Pancreas (tissue), 10 donors: ENCODE measurements at regions of chr1 and their contacts with region 1.

Region 1: DNA sequence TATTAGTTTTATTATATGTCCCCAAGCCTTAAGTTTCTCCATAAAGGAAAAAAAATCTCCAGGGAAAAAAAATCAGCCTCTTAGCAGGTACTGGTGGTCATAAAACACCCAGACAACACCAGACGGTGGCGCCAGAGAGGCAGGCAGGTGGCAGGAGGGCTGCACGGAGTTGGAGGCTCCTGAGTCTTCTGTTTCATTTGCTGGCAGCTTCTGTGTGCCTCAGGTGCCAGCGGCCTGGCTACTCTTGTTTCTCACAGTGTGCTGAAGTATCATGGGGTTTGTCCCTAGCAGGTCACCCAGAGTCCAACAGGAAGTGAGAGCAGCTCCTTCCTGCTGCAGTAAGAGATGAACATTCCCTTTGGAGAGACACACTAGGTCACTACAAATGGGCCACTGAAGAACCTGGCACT is 123.3 kb upstream of the GADD45A start:
- DNase-seq: peak; percentile 94 to 100 (median 96)
- ATAC-seq: peak; percentile 94 to 98 (median 96)
- H3K4me3 ChIP-seq: no peak overlapping the region
- H3K27ac ChIP-seq: peak overlapping the region in 3 of 4 donors; percentile 52 to 56 (median 55)
- H3K4me1 ChIP-seq: peaks cover 0 to 12% (median 8%) of the 10 kb centered on the region in 3 donors
- H3K27me3 ChIP-seq: no peaks in the 10 kb centered on the region
- CTCF ChIP-seq: peak; percentile 77 to 87 (median 83)

Region 2: GRCh38 chr1:67664048-67664447 is 102.3 kb after region 1 on chr1:
- intact Hi-C with region 1: loop called in 1 of 3 experiments (anchors 10 kb)
- DNase-seq: no peak
- ATAC-seq: no peak
- H3K4me3 ChIP-seq: no peak overlapping the region
- H3K27ac ChIP-seq: no peak overlapping the region
- H3K4me1 ChIP-seq: no peaks in the 10 kb centered on the region
- H3K27me3 ChIP-seq: no peaks in the 10 kb centered on the region
- CTCF ChIP-seq: no peak

Region 3: DNA sequence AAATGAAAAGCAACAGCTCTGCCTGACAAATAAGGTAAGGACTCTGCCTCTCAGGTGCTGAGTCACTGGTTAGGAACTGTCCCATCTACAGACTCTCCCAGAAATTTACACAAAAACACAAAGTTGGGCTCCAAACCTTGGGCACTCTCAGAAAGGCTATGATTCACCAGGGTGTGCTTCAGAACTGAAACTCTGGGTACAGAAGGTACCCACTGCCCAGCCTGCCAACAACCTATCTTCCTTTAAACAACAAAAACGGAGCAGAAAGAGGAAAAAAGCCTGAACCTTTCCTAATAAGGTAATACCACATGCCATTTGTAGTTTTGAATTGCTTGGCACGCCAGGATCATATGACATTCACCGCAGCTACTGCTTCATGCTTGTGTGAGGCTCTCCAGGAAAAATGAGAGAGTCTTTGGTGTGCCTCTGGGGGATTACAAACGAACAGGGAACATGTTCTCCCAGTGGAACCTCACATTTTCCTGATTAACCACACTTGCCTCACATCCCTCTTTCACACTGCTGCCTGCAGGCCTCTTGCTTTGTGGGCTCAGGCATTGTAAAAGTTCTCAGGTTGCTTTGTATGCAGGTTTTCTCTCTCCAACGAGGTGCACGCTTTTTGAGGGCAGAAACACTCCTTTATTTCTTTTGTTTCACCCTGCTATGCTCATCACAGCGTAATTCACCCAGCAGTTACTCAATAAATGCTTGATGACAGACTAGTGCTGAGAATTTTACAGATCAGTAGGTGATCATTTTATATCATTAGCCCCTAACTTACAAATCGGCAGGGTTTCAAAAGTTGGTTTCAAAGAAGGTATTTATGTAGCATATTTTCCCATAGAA is 188.4 kb after region 1 on chr1:
- intact Hi-C with region 1: loop called in 2 of 3 experiments (anchors 5 to 10 kb)
- DNase-seq: no peak
- ATAC-seq: peak; percentile 63 to 74 (median 68)
- H3K4me3 ChIP-seq: no peak overlapping the region
- H3K27ac ChIP-seq: peak overlapping the region; percentile 9 to 81 (median 50)
- H3K4me1 ChIP-seq: peaks cover 20 to 28% (median 27%) of the 10 kb centered on the region in 3 donors
- H3K27me3 ChIP-seq: no peaks in the 10 kb centered on the region
- CTCF ChIP-seq: no peak

Region 4: DNA sequence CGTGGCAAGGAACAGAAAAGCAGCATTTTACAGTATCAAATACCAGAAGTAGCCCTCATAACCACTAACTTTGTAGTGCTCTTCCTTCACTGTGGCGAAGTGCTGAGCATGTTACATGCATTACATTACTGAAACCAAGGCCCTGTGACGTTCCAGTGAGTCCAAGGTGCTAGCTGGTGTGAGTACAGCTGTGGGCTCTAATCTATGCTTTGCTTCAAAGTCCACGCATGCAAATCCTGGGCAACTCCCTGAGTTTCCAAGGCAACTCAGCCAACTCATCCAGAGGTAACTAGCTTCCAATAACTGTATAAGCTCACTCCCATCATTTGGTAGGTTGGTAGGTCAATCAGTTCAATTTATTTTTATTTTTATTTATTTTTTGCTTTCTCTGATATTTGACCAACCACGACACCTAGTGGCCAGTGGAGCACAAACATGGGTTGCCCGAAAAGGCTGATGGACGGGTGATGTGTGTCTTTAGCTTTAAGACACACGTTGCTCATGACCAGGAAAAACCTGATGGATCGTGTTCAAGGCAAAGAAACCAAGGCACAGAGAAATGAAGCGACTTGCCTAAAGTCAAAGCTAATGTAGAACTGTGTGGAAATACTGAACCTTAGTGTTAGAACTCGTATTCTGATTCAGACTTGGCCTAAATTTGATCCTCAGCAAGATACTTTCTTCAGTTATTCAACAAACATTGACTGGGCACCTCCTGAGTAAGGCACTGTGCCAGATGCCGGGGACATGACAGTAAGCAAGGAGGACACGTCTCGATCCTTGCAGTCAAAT is 198.5 kb after region 1 on chr1:
- intact Hi-C with region 1: loop called in 2 of 3 experiments (anchors 5 to 10 kb)
- DNase-seq: peak in 4 of 6 donors; percentile 49 to 69 (median 61)
- ATAC-seq: peak; percentile 91 to 95 (median 93)
- H3K4me3 ChIP-seq: no peak overlapping the region
- H3K27ac ChIP-seq: peak overlapping the region; percentile 22 to 49 (median 42)
- H3K4me1 ChIP-seq: peaks cover 4 to 11% (median 6%) of the 10 kb centered on the region in 3 donors
- H3K27me3 ChIP-seq: no peaks in the 10 kb centered on the region
- CTCF ChIP-seq: peak; percentile 65 to 83 (median 74)

Region 5: DNA sequence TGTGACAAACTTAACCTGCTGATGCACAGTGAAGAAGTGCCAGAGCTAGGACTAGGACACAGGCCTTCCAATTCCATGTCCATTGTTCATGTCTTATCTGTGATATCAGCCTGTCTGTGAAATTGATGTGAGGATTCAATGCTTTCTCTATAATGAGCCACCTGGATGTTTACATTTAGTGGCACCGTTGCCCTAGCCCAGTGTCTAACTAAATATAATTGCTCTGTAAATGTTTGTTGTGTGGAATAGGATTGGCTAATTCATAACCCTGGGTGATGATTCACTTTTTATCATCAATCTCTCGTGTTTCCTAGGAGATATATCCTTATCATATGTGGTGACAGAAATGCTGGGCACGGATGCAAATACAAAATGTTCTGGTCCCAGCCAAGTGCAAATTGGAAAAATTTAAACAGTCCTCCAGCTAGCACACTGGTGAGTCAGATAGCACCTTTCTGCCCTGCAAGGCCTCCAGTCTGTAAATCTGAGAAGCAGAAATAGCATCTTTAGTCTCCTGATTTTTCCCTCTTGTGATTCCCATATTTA is 318.4 kb after region 1 on chr1:
- intact Hi-C with region 1: no loop called
- DNase-seq: peak in 1 of 6 donors; percentile 29
- ATAC-seq: peak; percentile 64 to 91 (median 83)
- H3K4me3 ChIP-seq: no peak overlapping the region
- H3K27ac ChIP-seq: no peak overlapping the region
- H3K4me1 ChIP-seq: no peaks in the 10 kb centered on the region
- H3K27me3 ChIP-seq: no peaks in the 10 kb centered on the region
- CTCF ChIP-seq: no peak